Activated naive CD4-positive, alpha-beta T cell treated with anti-CD3 and anti-CD28 coated beads for 36 hours (primary cell): ENCODE measurements at regions of chr14 and their contacts with region 1.

Region 1: GRCh38 chr14:81625343-81625742 is 91.7 kb upstream of the SEL1L start:
- DNase-seq: no peak
- H3K4me3 Mint-ChIP-seq: no peak overlapping the region
- H3K27ac Mint-ChIP-seq: no peak overlapping the region
- H3K4me1 Mint-ChIP-seq: no peaks in the 10 kb centered on the region
- H3K27me3 Mint-ChIP-seq: peaks cover 9% of the 10 kb centered on the region

Region 2: GRCh38 chr14:79767251-79767650 is 1858.1 kb before region 1 on chr14:
- CTCF ChIA-PET with region 1: no interaction called
- intact Hi-C with region 1: no loop called
- DNase-seq: no peak
- H3K4me3 Mint-ChIP-seq: no peak overlapping the region
- H3K27ac Mint-ChIP-seq: no peak overlapping the region
- H3K4me1 Mint-ChIP-seq: no peaks in the 10 kb centered on the region
- H3K27me3 Mint-ChIP-seq: no peaks in the 10 kb centered on the region

Region 3: DNA sequence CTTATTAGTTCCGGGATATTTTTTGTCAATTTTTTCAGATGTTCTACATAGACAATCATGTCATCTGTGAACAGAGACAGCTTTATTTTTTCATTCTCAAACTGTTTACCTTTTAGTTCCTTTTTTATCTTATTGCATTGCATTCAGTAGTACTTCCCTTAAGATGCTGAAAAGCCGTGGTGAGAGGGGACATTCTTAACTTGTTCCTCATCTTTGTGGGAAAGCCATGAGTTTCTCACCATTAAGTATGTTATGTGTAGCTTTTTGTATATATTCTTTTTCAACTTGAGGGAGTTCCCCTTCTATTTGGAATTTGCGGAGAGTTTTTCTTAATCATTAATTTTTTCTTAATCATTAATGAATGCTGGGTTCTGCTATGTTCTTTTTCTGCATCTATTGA is 1635.4 kb after region 1 on chr14:
- CTCF ChIA-PET with region 1: no interaction called
- intact Hi-C with region 1: loop called (anchors 10 kb)
- DNase-seq: no peak
- H3K4me3 Mint-ChIP-seq: no peak overlapping the region
- H3K27ac Mint-ChIP-seq: no peak overlapping the region
- H3K4me1 Mint-ChIP-seq: no peaks in the 10 kb centered on the region
- H3K27me3 Mint-ChIP-seq: no peaks in the 10 kb centered on the region